HEK293 (cell line): ENCODE measurements at regions of chr16 and their contacts with region 1.

Region 1: DNA sequence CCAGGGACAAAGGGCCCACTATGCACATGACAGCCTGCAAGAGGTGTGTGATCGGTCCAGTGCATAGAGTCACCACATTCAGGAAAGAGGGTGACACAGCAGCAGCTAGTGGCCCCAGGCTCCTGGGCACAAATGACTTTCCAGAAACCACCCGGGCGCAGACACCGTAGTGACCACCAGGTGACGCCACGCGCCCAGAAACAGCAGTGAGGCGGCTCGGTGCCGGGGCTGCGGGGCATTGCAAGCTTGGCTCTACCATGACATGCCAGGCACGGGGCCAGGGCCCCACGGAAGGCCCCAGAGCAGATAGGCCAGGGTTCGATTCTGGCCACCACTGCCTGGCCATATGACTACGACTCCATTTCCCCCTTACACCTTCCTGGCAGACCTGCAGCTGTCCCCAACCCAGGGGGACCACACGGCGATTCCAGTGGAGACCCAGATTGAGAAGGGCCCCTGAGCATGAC is 6.7 kb downstream of the RHBDF1 start:
- H3K4me3 ChIP-seq: no peak overlapping the region
- H3K27ac ChIP-seq: no peak overlapping the region
- H3K4me1 ChIP-seq: no peaks in the 10 kb centered on the region
- CTCF ChIP-seq: peak; percentile 98

Region 2: DNA sequence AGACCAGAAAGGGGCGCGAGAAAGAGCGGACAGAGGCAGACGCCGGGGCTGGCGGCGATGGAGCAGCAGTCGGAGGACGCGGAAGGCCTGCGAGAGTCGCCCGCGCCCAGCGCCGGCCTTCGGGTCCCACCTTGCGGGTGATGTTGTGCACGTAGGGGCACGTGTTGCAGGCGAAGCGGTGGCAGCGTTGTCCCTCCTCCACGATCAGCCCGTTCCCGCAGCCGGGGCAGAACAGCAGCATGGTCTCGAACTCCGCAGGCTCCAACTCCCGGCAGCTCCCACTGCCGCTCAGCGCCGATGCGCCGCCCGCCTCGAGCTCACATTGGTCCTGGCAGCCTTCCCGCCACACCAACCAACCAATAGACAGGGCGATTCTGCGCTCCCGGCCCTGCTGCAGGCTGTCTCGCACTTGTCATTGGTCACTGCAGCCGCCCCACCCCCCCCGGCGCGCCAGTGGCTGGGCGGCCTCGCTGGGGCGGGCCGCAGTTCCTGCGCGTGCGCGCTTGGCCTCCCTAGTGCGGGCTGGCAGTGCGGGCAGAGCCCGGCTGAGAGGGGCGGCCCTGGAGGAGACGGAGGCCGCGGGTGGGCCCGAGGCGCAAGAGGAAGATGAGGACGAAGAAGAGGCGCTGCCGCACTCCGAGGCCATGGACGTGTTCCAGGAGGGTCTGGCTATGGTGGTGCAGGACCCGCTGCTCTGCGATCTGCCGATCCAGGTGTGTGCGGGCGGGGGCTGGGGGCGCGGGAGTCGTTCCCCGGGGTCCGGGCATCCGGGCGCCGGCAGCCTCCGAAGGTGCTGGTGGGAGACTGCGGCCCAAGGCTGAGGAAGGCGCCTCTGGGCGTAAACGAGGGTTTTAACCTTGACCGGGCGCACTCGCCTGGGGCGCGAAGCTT is 12.1 kb before region 1 on chr16 and contains the starts of genes POLR3K and SNRNP25:
- CTCF ChIA-PET with region 1: interaction called, 16 read pairs
- POLR2A ChIA-PET with region 1: interaction called, 17 read pairs
- H3K4me3 ChIP-seq: peak within 1 kb of the TSS; percentile 91
- H3K27ac ChIP-seq: peak within 1 kb of the TSS; percentile 84
- H3K4me1 ChIP-seq: no peaks in the 10 kb centered on the region
- CTCF ChIP-seq: no peak

Region 3: GRCh38 chr16:84718-85406 is 19.2 kb after region 1 on chr16:
- CTCF ChIA-PET with region 1: interaction called, 34 read pairs
- POLR2A ChIA-PET with region 1: interaction called, 3 read pairs
- H3K4me3 ChIP-seq: no peak overlapping the region
- H3K27ac ChIP-seq: no peak overlapping the region
- H3K4me1 ChIP-seq: no peaks in the 10 kb centered on the region
- CTCF ChIP-seq: no peak

Region 4: GRCh38 chr16:96935-97381 is 31.3 kb after region 1 on chr16:
- CTCF ChIA-PET with region 1: interaction called, 245 read pairs
- POLR2A ChIA-PET with region 1: interaction called, 7 read pairs
- H3K4me3 ChIP-seq: no peak overlapping the region
- H3K27ac ChIP-seq: no peak overlapping the region
- H3K4me1 ChIP-seq: no peaks in the 10 kb centered on the region
- CTCF ChIP-seq: peak; percentile 99

Region 5: DNA sequence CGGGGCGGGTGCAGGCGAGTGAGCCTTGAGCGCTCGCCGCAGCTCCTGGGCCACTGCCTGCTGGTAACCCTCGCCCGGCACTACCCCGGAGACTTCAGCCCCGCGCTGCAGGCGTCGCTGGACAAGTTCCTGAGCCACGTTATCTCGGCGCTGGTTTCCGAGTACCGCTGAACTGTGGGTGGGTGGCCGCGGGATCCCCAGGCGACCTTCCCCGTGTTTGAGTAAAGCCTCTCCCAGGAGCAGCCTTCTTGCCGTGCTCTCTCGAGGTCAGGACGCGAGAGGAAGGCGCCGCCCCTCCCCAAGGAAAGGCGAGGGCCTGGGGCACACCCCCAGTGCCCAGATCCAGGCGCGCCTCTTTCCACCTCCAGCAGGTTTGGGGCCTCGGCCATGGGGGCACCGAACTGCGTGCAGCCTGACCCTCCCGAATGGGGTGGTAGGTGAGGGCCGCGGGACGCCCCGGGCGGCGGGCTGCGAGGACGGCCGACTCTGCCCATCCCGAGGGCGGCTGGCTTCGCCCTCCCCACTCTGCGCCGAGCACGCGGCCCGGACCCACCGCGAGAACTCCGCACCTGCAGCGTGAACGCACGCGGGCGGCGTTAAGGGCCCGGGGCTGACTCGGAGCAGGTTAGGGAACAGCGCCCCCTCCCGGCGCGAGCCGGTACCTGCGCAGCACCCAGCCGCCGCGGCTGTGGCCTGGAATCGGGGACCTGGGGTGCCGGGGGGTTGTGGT is 115.4 kb after region 1 on chr16:
- CTCF ChIA-PET with region 1: interaction called, 12 read pairs
- POLR2A ChIA-PET with region 1: interaction called, 3 read pairs
- H3K4me3 ChIP-seq: no peak overlapping the region; the same call in 1 of the 2 replicates
- H3K27ac ChIP-seq: peak overlapping the region; percentile 25; the same call in 1 of the 2 replicates
- H3K4me1 ChIP-seq: peaks cover 3% of the 10 kb centered on the region; the same call in 1 of the 2 replicates
- CTCF ChIP-seq: peak; percentile 96

Region 6: GRCh38 chr16:252366-253337 is 186.9 kb after region 1 on chr16:
- CTCF ChIA-PET with region 1: no interaction called
- POLR2A ChIA-PET with region 1: no interaction called
- H3K4me3 ChIP-seq: no peak overlapping the region
- H3K27ac ChIP-seq: no peak overlapping the region
- H3K4me1 ChIP-seq: no peaks in the 10 kb centered on the region
- CTCF ChIP-seq: no peak